ENCODE measurements at regions of chr2 and their contacts with region 1.

Region 1: GRCh38 chr2:219642465-219643080 is 15.1 kb downstream of the SLC4A3 start:
- DNase-seq: peak; percentile 85
- H3K4me3 Mint-ChIP-seq: no peak overlapping the region
- H3K27ac Mint-ChIP-seq: no peak overlapping the region
- H3K4me1 Mint-ChIP-seq: peaks cover 6% of the 10 kb centered on the region
- H3K27me3 Mint-ChIP-seq: peaks cover 7% of the 10 kb centered on the region

Region 2: DNA sequence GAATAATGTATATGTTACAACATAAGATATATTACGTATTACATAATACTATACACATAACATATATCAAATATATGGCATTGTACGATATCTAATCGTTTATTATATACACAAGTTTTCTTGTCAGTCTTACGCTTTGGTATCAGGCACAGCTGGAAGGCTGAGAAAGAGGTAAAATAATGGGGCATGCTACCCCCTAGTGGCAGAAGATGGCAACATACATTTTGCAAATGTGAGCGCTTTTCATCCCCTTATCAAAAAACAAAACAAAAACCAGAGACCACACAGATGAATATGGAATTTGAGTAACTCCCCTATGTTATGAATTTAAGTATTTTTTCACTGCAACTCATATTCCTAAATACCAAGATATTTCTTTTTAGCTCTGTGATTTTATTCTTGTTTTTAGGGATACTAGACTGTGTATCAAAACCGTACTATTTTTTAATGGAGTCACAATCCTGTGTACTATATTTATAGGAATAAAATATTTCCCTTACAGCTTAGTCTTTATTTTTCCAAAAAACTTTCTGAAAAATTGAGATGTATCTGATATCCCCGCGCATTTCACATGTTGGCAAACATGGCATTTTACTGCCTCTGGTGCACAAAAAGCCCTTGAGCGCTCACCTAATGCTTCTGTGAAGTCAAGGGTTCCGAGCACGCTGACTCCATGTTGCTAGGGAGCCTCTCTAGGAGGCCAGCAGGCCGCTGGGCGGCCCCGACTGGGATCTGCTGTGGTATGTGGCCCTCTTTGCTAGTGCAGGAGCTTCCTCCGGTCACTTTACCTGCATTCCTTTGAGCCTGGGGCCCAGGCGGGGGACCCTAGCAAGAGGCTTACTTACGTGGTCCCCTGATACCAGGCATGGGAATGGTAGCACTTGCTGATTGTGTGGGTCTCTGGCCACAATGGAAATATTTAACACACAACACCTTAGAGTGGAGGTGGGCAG is 47.4 kb after region 1 on chr2:
- intact Hi-C with region 1: loop called (anchors 2 kb)
- DNase-seq: peak; percentile 11
- H3K4me3 Mint-ChIP-seq: no peak overlapping the region
- H3K27ac Mint-ChIP-seq: no peak overlapping the region
- H3K4me1 Mint-ChIP-seq: peaks cover 5% of the 10 kb centered on the region
- H3K27me3 Mint-ChIP-seq: peaks cover 10% of the 10 kb centered on the region